Activated naive CD4-positive, alpha-beta T cell treated with anti-CD3 and anti-CD28 coated beads for 36 hours (primary cell): ENCODE measurements at regions of chr10 and their contacts with region 1.

Region 1: DNA sequence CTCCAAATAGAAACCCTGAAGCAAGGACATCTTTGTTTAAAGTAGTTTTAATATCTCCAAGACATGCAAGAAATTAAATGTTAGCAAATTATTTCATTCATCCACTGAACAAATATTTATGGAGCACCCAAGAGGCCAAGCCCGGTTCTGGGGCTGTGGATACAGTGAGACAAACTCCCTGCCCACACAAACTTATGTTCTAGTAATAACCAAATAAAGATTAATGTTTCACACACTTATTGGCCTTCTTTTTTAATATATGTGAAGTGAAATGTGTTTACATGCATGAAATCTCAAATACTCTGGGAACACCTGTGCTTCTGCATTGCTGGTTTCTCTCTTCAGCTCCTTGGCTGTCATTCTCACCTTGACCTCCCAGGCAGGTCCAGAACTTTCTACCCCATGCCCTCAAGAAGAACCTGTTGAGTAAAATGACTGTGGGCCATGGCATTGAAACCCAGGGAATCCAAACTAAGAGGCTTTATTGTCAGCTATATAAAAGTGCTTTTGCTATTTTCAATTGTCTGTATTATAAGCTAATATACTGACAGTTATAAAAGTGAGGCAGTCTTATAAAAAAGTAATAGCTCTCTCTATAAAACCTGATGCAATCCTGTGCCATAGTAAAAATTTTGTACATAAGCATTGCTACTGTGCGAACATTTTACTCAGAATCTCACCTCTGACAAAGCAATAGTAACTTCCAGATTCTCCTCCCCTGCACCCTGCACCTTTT is 43.7 kb downstream of the SVIL start:
- DNase-seq: no peak
- H3K4me3 Mint-ChIP-seq: no peak overlapping the region
- H3K27ac Mint-ChIP-seq: no peak overlapping the region
- H3K4me1 Mint-ChIP-seq: peaks cover 8% of the 10 kb centered on the region
- H3K27me3 Mint-ChIP-seq: no peaks in the 10 kb centered on the region

Region 2: GRCh38 chr10:29386342-29386999 is 204.6 kb before region 1 on chr10:
- CTCF ChIA-PET with region 1: no interaction called
- intact Hi-C with region 1: loop called (anchors 5 kb)
- DNase-seq: peak; percentile 11
- H3K4me3 Mint-ChIP-seq: no peak overlapping the region
- H3K27ac Mint-ChIP-seq: no peak overlapping the region
- H3K4me1 Mint-ChIP-seq: no peaks in the 10 kb centered on the region
- H3K27me3 Mint-ChIP-seq: peaks cover 4% of the 10 kb centered on the region

Region 3: GRCh38 chr10:29482591-29483431 is 108.3 kb before region 1 on chr10:
- CTCF ChIA-PET with region 1: no interaction called
- intact Hi-C with region 1: no loop called
- DNase-seq: peak; percentile 62
- H3K4me3 Mint-ChIP-seq: no peak overlapping the region
- H3K27ac Mint-ChIP-seq: peak overlapping the region; percentile 25
- H3K4me1 Mint-ChIP-seq: peaks cover 31% of the 10 kb centered on the region
- H3K27me3 Mint-ChIP-seq: no peaks in the 10 kb centered on the region

Region 4: DNA sequence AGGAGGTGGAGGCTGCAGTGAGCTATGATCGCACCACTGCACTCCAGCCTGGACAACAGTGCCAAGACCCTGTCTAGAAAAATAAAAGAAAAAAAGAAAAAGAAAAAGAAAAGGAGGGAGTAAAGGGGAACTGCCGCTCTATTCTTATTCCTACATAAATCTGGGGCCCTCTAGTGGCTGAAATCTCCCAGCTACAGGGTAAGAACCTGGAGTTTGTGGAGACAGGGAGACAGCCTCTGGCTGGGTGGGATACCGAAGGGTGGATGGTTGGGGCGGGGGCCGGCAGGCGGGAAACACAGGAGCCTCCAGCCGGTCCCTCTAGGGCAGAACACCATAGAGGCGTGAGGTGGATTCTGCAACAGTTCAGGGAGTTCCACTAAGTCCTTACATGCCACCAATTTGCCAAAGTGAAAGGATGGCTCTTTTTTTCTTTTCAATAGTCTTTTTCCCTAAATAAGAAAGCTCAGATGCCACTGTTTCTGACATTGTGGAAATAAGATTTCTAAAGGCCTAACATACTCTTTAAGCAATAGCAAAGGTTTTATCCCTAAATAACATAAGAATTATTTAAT is 73.6 kb before region 1 on chr10:
- CTCF ChIA-PET with region 1: interaction called, 3 read pairs
- intact Hi-C with region 1: loop called (anchors 2 kb)
- DNase-seq: no peak
- H3K4me3 Mint-ChIP-seq: no peak overlapping the region
- H3K27ac Mint-ChIP-seq: no peak overlapping the region
- H3K4me1 Mint-ChIP-seq: no peaks in the 10 kb centered on the region
- H3K27me3 Mint-ChIP-seq: no peaks in the 10 kb centered on the region

Region 5: DNA sequence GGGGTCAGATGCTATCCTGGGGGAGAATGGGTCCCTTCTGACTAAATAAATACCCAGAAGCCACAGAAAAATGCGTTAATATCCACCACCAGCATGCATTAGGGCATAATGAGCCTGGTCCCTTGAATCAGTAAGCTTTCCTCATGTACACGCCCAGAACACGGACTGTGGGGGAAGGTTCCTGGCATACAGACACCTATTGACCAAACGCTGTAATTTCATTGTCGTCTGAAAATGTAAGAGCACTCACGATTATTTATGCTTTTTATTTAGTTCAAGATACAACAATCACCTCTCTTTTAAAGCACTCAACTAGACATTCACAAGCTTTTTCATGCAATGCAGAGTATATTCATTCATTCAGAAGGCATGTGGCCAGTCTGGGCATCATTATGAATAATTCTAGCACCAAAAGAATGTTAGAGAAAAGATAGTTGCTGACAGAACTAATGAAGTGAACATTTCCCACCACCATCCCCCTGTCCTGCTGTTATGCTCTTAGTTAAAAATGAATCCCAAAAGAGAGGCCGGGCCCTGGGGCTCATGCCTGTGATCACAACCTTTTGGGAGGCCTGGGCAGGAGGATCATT is 57.3 kb before region 1 on chr10:
- CTCF ChIA-PET with region 1: no interaction called
- intact Hi-C with region 1: loop called (anchors 5 kb)
- DNase-seq: no peak
- H3K4me3 Mint-ChIP-seq: no peak overlapping the region
- H3K27ac Mint-ChIP-seq: no peak overlapping the region
- H3K4me1 Mint-ChIP-seq: no peaks in the 10 kb centered on the region
- H3K27me3 Mint-ChIP-seq: no peaks in the 10 kb centered on the region